ENCODE measurements at regions of chr6 and their contacts with region 1.

Region 1: DNA sequence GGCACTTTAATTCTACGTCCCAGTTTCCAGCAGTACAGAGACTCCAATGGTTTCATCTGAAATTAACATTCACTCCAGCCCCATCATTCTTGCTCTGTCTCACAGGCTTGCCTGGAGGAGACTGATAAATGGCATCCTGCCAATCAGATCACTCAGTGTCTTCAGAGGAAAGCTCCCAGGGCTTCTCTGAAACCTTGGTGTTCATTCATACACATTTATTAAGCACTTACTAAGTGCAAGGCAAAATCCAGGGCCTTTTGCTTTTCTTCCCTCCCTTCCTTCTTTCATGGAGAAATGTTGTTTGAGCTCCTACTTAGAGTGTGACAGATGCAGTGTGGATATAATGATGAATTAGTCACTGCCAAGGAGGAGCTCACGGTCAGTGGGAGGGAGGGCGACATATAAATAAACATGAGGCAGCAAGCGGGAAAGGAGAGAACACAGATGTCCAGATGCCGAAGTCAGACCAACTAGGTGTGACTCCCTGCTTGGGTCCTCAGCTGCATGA is 106.7 kb upstream of the DTNBP1 start:
- DNase-seq: no peak
- H3K4me3 ChIP-seq: no peak overlapping the region
- H3K27ac ChIP-seq: no peak overlapping the region
- H3K4me1 ChIP-seq: no peaks in the 10 kb centered on the region
- H3K27me3 ChIP-seq: no peaks in the 10 kb centered on the region
- CTCF ChIP-seq: no peak
- EP300 ChIP-seq: no peak
- POLR2A ChIP-seq: no peak

Region 2: DNA sequence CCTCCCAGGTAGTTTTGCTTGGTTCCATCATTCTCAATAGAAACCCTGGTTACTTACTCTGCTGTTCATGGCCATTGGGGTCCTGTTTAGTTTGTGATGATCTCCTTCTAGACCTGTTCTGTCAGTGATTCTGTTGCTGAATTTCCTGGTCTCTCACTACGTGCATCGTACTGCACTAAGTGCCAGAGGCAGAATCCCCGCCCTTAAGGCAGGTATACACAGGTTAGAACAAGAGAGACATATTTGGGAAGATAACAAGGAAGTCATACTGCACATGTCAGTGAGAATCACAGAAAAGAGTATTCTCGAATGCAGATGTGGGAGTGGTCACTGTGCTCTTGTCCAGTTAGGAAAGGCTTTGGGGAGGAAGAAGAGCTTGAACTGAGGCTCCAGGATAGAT is 211.2 kb after region 1 on chr6:
- intact Hi-C with region 1: loop called in 1 of 4 experiments (anchors 5 kb)
- DNase-seq: no peak
- H3K4me3 ChIP-seq: no peak overlapping the region
- H3K27ac ChIP-seq: no peak overlapping the region
- H3K4me1 ChIP-seq: no peaks in the 10 kb centered on the region
- H3K27me3 ChIP-seq: no peaks in the 10 kb centered on the region
- CTCF ChIP-seq: no peak
- EP300 ChIP-seq: no peak
- POLR2A ChIP-seq: no peak